CD8-positive, alpha-beta T cell (primary cell): ENCODE measurements at regions of chr12 and their contacts with region 1.

Region 1: DNA sequence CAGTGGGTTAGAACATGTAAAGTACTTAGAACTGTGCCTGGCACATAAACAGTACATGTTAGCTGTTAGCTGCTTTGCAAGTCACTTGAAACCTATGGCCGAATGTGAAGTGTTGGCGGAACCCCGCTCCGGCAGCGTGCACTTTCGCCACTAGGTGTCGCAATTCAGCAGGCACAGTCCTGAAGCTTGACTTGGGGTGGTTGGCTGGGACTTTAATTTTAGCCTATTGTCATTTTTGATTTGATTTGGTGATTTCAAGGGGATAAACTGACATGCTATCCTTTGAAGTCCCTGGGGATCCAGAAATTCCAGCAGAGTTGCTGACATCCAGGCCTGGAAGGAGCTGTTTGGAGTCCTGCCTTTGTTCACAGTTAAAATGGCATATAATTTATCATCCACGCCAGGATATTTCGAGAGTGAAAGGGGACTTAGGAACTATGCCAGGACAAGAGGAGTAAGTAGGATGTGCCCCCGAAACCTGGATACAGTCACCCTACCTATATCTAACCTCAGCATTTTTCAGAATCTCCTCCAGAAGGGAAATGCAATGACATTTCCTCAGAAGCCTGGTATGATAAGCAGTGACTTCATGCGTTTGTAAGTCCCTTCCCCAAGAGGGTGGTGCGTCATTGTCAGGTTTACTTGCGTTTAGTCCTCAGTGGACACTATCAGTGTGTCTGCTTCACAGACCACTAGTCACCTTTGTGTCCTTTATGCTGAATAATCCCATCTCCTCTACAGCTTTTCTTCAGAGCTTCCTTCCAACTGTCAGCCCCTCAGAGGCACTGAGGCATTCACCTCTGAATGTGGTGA is 3.5 kb upstream of the TSPAN9 start:
- DNase-seq: peak; percentile 68 to 90 (median 83)
- ATAC-seq: peak; percentile 41
- H3K4me3 ChIP-seq: no peak overlapping the region
- H3K4me3 Mint-ChIP-seq: no peak overlapping the region
- H3K27ac ChIP-seq: no peak overlapping the region
- H3K27ac Mint-ChIP-seq: no peak overlapping the region
- H3K4me1 ChIP-seq: peaks cover 10% of the 10 kb centered on the region
- H3K4me1 Mint-ChIP-seq: peaks cover 13% of the 10 kb centered on the region
- H3K27me3 ChIP-seq: peaks cover 0 to 8% of the 10 kb centered on the region in 2 experiments
- H3K27me3 Mint-ChIP-seq: peaks cover 11% of the 10 kb centered on the region
- CTCF ChIP-seq: peak; percentile 91

Region 2: DNA sequence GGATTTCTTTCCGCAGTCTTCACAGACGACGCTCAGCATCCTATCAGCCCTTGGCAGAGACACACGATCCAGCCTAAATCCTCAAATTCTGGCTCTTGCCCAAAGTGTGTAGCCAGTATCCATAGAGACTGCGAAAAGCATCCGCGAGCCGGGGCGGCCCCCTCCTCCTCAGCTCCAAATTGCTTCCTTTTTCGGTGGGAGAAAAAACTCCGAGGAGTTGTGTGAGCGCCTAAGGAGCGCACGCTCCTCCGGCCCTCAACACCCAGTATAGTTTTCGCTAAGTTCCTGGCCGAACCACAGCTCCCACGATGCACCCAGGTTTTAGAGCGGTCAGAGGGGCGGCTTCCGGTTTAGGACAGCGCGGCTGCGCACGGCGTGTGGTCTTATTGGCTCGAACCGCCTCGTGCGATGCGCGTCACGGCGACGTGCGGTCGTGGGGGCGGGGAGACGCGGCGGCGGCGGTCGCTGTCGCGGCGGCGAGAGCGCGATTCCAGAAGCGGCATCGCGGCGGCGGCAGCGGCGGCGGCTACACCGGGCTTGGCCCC is 1383.0 kb before region 1 on chr12 and contains the start of gene ADIPOR2:
- CTCF ChIA-PET with region 1: no interaction called
- POLR2A ChIA-PET with region 1: no interaction called
- intact Hi-C with region 1: loop called in 1 of 2 experiments (anchors 5 kb)
- DNase-seq: peak; percentile 88 to 98 (median 94)
- ATAC-seq: peak; percentile 97
- H3K4me3 ChIP-seq: peak within 1 kb of the TSS; percentile 84 to 91
- H3K4me3 Mint-ChIP-seq: peak within 1 kb of the TSS; percentile 92
- H3K27ac ChIP-seq: peak within 1 kb of the TSS; percentile 73 to 94
- H3K27ac Mint-ChIP-seq: peak within 1 kb of the TSS; percentile 99
- H3K4me1 ChIP-seq: peaks cover 20% of the 10 kb centered on the region
- H3K4me1 Mint-ChIP-seq: peaks cover 46% of the 10 kb centered on the region
- H3K27me3 ChIP-seq: no peaks in the 10 kb centered on the region
- H3K27me3 Mint-ChIP-seq: no peaks in the 10 kb centered on the region
- CTCF ChIP-seq: no peak
- total RNA-seq, gene ADIPOR2: 19.4 to 22.5 TPM

Region 3: DNA sequence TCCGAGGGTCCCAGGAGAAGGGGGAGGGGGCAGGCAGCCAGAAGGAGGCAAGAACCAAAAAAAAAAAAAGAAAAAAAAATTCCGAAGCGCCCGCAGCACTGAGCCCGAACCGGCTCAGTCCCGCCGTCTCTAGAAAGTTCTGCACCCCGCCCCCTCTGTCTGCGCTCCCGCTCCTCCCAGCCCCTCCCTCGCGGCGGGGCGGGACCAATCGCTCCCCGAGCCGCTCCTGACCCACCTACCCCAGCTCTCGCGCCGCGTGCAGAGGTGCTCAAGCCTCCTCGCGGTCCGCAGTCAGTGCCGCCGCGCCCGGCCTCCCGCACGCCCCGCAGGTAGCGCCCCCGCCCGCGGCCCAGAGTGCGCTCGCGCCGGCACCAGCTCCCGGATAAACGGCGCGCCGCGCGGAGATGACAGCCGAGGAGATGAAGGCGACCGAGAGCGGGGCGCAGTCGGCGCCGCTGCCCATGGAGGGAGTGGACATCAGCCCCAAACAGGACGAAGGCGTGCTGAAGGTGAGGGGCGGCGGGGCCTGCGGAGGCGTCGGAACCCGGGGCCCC is 278.8 kb before region 1 on chr12 and contains the start of gene FKBP4:
- CTCF ChIA-PET with region 1: interaction called, 3 read pairs
- POLR2A ChIA-PET with region 1: no interaction called
- intact Hi-C with region 1: loop called in 1 of 2 experiments (anchors 10 kb)
- DNase-seq: peak; percentile 75 to 95 (median 88)
- ATAC-seq: peak; percentile 92
- H3K4me3 ChIP-seq: peak within 1 kb of the TSS; percentile 69 to 71
- H3K4me3 Mint-ChIP-seq: peak within 1 kb of the TSS; percentile 91
- H3K27ac ChIP-seq: peak within 1 kb of the TSS; percentile 50 to 63
- H3K27ac Mint-ChIP-seq: peak within 1 kb of the TSS; percentile 88
- H3K4me1 ChIP-seq: peaks cover 12% of the 10 kb centered on the region
- H3K4me1 Mint-ChIP-seq: peaks cover 24% of the 10 kb centered on the region
- H3K27me3 ChIP-seq: no peaks in the 10 kb centered on the region
- H3K27me3 Mint-ChIP-seq: no peaks in the 10 kb centered on the region
- CTCF ChIP-seq: no peak
- total RNA-seq, gene FKBP4: 31.1 to 34.5 TPM

Region 4: DNA sequence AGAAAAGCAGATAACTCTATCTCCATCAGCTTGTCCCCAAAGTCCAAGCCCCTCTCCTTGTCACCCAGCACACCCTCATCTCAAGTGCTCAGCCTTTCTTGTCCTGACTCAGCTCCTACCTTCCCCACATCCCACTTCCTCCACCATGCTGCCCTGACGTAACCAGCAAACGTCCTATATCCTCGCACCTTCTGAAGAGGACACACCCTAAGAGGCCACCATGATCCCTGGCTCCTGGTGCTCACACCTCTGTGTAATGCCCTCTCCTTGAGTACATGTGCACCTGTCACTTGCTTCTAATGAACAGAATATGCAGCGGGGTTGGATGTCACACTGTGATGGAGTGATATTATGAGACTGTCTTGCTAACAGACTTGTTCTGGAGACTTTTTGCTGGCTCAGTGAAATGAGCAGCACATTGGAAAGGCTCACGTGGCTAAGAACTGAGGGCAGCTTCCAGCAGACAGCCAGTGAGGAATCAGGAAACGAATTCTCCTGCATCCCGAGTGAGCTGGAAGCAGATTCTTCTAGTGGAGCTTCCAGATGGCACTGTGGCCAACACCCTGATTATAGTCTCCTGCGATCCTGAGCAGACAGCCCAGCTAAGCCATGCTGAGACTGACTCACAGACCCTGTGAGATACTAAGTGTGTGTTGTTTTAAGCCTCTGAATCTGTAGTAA is 12.7 kb before region 1 on chr12:
- CTCF ChIA-PET with region 1: interaction called, 16 read pairs
- POLR2A ChIA-PET with region 1: no interaction called
- intact Hi-C with region 1: no loop called
- DNase-seq: no peak
- ATAC-seq: no peak
- H3K4me3 ChIP-seq: no peak overlapping the region
- H3K4me3 Mint-ChIP-seq: no peak overlapping the region
- H3K27ac ChIP-seq: no peak overlapping the region
- H3K27ac Mint-ChIP-seq: no peak overlapping the region
- H3K4me1 ChIP-seq: no peaks in the 10 kb centered on the region
- H3K4me1 Mint-ChIP-seq: no peaks in the 10 kb centered on the region
- H3K27me3 ChIP-seq: no peaks in the 10 kb centered on the region
- H3K27me3 Mint-ChIP-seq: peaks cover 36% of the 10 kb centered on the region
- CTCF ChIP-seq: no peak

Region 5: DNA sequence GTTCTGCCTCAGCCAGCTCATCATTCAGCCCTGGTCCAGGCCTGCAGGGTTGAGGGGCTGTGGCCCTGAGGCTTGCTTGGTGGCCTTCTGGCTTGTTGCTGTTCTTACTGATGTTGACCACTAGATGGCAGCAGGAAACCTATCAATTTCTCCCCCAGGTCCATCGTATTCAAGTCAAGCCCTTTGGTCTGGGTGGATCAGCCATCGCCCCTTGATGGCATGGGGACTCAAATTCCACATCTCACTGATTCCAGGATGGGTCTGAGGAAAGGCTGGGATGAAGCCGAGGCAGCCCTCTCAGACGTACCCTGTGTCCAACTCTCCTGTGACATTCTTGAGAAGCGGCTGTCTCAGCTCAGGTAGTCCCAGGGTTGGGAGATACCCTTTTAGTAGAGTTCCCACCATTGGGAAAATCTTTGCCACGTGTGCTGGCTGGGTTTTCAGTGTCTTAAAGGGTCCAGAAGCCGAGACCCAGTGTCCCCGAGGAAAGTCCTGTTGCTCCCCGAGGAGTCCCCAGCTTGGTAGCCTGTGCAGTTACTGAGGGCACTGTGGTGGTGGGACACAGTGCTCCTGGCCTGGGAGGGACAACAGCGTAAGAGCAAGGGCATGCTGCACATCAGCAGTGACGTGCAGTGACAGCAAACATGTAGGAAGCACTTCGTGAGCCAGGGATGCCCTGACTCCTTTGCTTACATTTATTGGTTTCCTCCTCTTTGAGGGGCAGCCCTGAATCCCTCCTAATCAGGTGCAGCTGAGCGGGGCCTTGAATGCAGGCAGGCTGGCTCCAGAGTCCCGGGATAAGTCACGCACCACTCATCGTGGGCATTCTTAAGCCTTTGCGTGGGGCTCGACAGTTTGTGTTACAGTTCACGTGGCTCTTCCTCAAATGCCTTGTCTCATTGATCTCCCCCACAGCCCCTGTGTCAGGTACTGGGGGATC is 62.1 kb after region 1 on chr12:
- CTCF ChIA-PET with region 1: interaction called, 4 read pairs
- POLR2A ChIA-PET with region 1: no interaction called
- intact Hi-C with region 1: loop called in 1 of 2 experiments (anchors 1 kb)
- DNase-seq: peak in 7 of 9 experiments; percentile 3 to 72 (median 34)
- ATAC-seq: peak; percentile 49
- H3K4me3 ChIP-seq: no peak overlapping the region
- H3K4me3 Mint-ChIP-seq: no peak overlapping the region
- H3K27ac ChIP-seq: no peak overlapping the region
- H3K27ac Mint-ChIP-seq: no peak overlapping the region
- H3K4me1 ChIP-seq: no peaks in the 10 kb centered on the region
- H3K4me1 Mint-ChIP-seq: peaks cover 3% of the 10 kb centered on the region
- H3K27me3 ChIP-seq: peaks cover 3 to 5% of the 10 kb centered on the region in 2 experiments
- H3K27me3 Mint-ChIP-seq: peaks cover 50% of the 10 kb centered on the region
- CTCF ChIP-seq: peak; percentile 78

Region 6: DNA sequence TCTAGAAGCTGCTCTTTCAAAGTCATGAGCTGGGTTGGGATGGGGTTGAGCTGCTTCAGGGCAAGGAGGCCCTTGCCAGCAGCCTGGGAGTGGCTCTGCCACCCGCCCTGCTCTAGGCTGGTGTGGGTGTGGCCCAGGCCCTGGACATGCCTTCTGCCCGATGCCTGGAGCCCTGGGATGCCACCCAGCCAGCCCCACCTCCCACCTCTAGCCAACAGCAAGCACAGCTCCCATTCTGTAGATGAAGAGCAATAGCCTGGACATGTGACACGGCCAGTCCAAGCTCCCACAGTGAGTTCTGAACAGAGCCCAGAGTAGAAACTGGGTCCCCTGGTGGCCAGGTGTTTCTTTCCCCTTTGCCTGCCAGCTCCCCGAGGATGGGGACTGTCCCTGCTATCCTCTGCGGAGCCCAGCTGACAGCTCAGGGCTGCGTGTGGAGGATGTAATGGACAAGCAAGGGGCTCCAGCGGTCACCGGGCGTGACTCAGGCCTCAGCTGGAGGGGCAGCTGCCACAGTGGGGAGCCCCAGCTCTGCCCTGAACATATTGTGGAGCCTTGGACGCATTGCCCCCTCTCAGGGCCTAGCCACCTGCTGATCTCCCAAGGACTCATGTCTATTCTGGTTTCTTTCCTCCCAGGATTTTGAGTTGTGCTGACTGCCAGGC is 168.7 kb after region 1 on chr12:
- CTCF ChIA-PET with region 1: no interaction called
- POLR2A ChIA-PET with region 1: no interaction called
- intact Hi-C with region 1: loop called in 1 of 2 experiments (anchors 1 kb)
- DNase-seq: no peak
- ATAC-seq: no peak
- H3K4me3 ChIP-seq: no peak overlapping the region
- H3K4me3 Mint-ChIP-seq: no peak overlapping the region
- H3K27ac ChIP-seq: no peak overlapping the region
- H3K27ac Mint-ChIP-seq: no peak overlapping the region
- H3K4me1 ChIP-seq: no peaks in the 10 kb centered on the region
- H3K4me1 Mint-ChIP-seq: no peaks in the 10 kb centered on the region
- H3K27me3 ChIP-seq: no peaks in the 10 kb centered on the region
- H3K27me3 Mint-ChIP-seq: no peaks in the 10 kb centered on the region
- CTCF ChIP-seq: no peak

Region 7: DNA sequence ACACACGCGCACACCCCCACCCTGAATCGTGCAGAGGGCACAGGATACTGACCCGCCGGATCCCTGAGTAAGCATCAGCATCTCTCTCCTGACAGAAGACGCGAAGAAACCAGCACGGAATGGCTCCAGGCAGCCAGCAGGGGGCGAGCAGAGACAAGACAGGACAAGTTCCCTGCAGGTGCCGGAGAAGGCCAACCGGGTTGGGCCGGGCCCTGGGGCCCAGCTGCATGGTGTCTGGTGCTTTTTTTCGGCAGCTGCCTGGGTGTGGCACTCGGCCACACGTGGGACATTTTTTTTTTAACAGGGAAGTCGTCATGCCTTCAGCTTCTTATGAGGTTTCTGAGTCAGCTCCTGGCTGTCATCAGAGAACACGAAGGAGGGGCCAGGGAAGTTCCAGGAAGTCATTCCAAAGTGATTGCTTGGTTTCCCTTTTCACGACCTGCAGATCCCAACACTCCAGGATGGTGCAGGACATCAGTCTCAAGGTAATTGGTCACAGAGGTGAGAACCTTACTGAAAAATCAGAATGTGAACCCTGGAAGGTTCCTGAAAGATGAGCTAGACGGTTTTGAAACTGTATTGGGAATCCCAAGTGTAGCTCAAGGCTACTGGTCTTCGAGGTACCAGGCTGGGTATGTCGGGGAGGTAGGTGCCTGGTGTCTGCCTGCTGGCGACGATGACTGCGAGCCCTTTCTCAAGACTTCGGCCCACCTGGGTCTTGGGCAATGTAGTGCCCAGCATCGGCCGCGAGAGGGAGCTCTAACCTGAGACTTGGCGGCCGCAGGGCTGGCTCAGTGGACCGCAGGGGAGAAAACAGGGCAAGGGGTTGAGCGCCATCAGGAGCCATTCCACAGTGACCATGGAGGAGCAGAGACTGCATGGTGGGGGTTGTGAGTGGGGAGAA is 226.5 kb after region 1 on chr12:
- CTCF ChIA-PET with region 1: interaction called, 4 read pairs
- POLR2A ChIA-PET with region 1: no interaction called
- intact Hi-C with region 1: loop called in 1 of 2 experiments (anchors 1 kb)
- DNase-seq: peak; percentile 58 to 83 (median 77)
- ATAC-seq: peak; percentile 84
- H3K4me3 ChIP-seq: peak overlapping the region; percentile 4
- H3K4me3 Mint-ChIP-seq: peak overlapping the region; percentile 57
- H3K27ac ChIP-seq: no peak overlapping the region
- H3K27ac Mint-ChIP-seq: peak overlapping the region; percentile 70
- H3K4me1 ChIP-seq: peaks cover 9% of the 10 kb centered on the region
- H3K4me1 Mint-ChIP-seq: peaks cover 10% of the 10 kb centered on the region
- H3K27me3 ChIP-seq: no peaks in the 10 kb centered on the region
- H3K27me3 Mint-ChIP-seq: peaks cover 11% of the 10 kb centered on the region
- CTCF ChIP-seq: peak; percentile 78

Region 8: GRCh38 chr12:4786797-4787196 is 1713.2 kb after region 1 on chr12:
- CTCF ChIA-PET with region 1: no interaction called
- POLR2A ChIA-PET with region 1: no interaction called
- intact Hi-C with region 1: no loop called
- DNase-seq: no peak
- ATAC-seq: no peak
- H3K4me3 ChIP-seq: no peak overlapping the region
- H3K4me3 Mint-ChIP-seq: no peak overlapping the region
- H3K27ac ChIP-seq: no peak overlapping the region
- H3K27ac Mint-ChIP-seq: no peak overlapping the region
- H3K4me1 ChIP-seq: no peaks in the 10 kb centered on the region
- H3K4me1 Mint-ChIP-seq: no peaks in the 10 kb centered on the region
- H3K27me3 ChIP-seq: no peaks in the 10 kb centered on the region
- H3K27me3 Mint-ChIP-seq: peaks cover 13% of the 10 kb centered on the region
- CTCF ChIP-seq: no peak